ENCODE measurements at regions of chr3 and their contacts with region 1.

Region 1: GRCh38 chr3:184174646-184175492 is at the start of gene AP2M1:
- DNase-seq: peak; percentile 95
- H3K4me3 ChIP-seq: peak within 1 kb of the TSS; percentile 93 to 96
- H3K27ac ChIP-seq: peak within 1 kb of the TSS; percentile 86 to 87
- H3K4me1 ChIP-seq: peaks cover 25 to 29% of the 10 kb centered on the region in 2 experiments
- H3K27me3 ChIP-seq: no peaks in the 10 kb centered on the region
- CTCF ChIP-seq: peak; percentile 25; the same call in 1 of the 2 replicates
- EP300 ChIP-seq: no peak
- RAD21 ChIP-seq: peak; percentile 7
- polyA plus RNA-seq, gene AP2M1: 645 and 759 TPM in 2 replicates

Region 2: GRCh38 chr3:184185461-184186308 is 10.8 kb after region 1 on chr3 and contains the start of gene ABCF3:
- CTCF ChIA-PET with region 1: interaction called, 13 read pairs
- POLR2A ChIA-PET with region 1: interaction called, 6 read pairs
- DNase-seq: peak; percentile 97
- H3K4me3 ChIP-seq: peak within 1 kb of the TSS; percentile 99 to 100
- H3K27ac ChIP-seq: peak within 1 kb of the TSS; percentile 84 to 96
- H3K4me1 ChIP-seq: peaks cover 6 to 20% of the 10 kb centered on the region in 2 experiments; a peak in 3 of 4 replicates
- H3K27me3 ChIP-seq: no peaks in the 10 kb centered on the region
- CTCF ChIP-seq: no peak
- EP300 ChIP-seq: peak in 1 of 2 experiments; percentile 8; a peak in 1 of 4 replicates
- RAD21 ChIP-seq: 0 out of 2 replicates have a peak, but pooled peaks have one; percentile 32
- polyA plus RNA-seq, gene ABCF3: 55.6 and 59.2 TPM in 2 replicates

Region 3: GRCh38 chr3:184848934-184849333 is 674.1 kb after region 1 on chr3:
- CTCF ChIA-PET with region 1: no interaction called
- POLR2A ChIA-PET with region 1: no interaction called
- DNase-seq: no peak
- H3K4me3 ChIP-seq: no peak overlapping the region
- H3K27ac ChIP-seq: no peak overlapping the region
- H3K4me1 ChIP-seq: no peaks in the 10 kb centered on the region
- H3K27me3 ChIP-seq: no peaks in the 10 kb centered on the region
- CTCF ChIP-seq: no peak
- EP300 ChIP-seq: no peak
- RAD21 ChIP-seq: no peak